H1 (cell line): ENCODE measurements at regions of chr7 and their contacts with region 1.

Region 1: DNA sequence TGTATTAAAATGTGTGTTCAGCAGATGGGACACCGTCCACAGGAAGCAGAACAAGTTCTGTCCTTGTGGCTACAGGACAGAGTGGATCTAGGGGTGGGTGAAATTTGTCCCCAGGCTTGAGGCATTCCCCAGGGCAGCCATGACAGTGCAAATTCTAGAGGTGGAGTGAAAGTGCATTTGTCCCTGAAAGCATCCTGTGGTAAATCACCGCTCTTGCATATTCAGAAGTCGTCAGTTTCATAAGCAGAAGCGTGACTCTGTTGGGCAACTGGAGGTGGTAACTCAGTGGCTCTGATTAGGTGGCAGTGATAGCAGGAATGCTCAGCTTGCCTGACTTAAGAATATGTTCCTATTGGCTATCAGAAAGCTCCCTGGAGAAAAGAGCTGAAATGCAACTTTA is 96.6 kb downstream of the SNX10 start:
- DNase-seq: no peak
- H3K4me3 ChIP-seq: no peak overlapping the region
- H3K27ac ChIP-seq: no peak overlapping the region
- H3K4me1 ChIP-seq: peaks cover 0 to 5% (median 1%) of the 10 kb centered on the region in 4 experiments; a peak in 1 of 7 replicates
- H3K27me3 ChIP-seq: no peaks in the 10 kb centered on the region
- CTCF ChIP-seq: no peak
- EP300 ChIP-seq: no peak
- POLR2A ChIP-seq: no peak
- RAD21 ChIP-seq: no peak

Region 2: GRCh38 chr7:26376175-26376917 is 11.9 kb before region 1 on chr7:
- CTCF ChIA-PET with region 1: interaction called, 17 read pairs
- POLR2A ChIA-PET with region 1: no interaction called
- DNase-seq: peak in 1 of 2 experiments; percentile 95
- H3K4me3 ChIP-seq: peak overlapping the region; percentile 44 to 89 (median 78)
- H3K27ac ChIP-seq: no peak overlapping the region
- H3K4me1 ChIP-seq: peaks cover 0 to 2% (median 0%) of the 10 kb centered on the region in 4 experiments; a peak in 2 of 7 replicates
- H3K27me3 ChIP-seq: no peaks in the 10 kb centered on the region
- CTCF ChIP-seq: no peak
- EP300 ChIP-seq: no peak
- POLR2A ChIP-seq: no peak
- RAD21 ChIP-seq: no peak; a peak in 1 of 4 replicates

Region 3: GRCh38 chr7:26398756-26399501 is 10.7 kb after region 1 on chr7:
- CTCF ChIA-PET with region 1: interaction called, 10 read pairs
- POLR2A ChIA-PET with region 1: interaction called, 8 read pairs
- DNase-seq: peak in 1 of 2 experiments; percentile 79
- H3K4me3 ChIP-seq: peak overlapping the region; percentile 78 to 87 (median 80)
- H3K27ac ChIP-seq: peak overlapping the region; percentile 84
- H3K4me1 ChIP-seq: peaks cover 0 to 13% (median 3%) of the 10 kb centered on the region in 4 experiments; a peak in 5 of 7 replicates
- H3K27me3 ChIP-seq: no peaks in the 10 kb centered on the region
- CTCF ChIP-seq: peak; percentile 34 to 46 (median 45)
- EP300 ChIP-seq: no peak
- POLR2A ChIP-seq: peak in 1 of 2 experiments; percentile 56; a peak in 1 of 3 replicates
- RAD21 ChIP-seq: peak; percentile 45 to 55

Region 4: DNA sequence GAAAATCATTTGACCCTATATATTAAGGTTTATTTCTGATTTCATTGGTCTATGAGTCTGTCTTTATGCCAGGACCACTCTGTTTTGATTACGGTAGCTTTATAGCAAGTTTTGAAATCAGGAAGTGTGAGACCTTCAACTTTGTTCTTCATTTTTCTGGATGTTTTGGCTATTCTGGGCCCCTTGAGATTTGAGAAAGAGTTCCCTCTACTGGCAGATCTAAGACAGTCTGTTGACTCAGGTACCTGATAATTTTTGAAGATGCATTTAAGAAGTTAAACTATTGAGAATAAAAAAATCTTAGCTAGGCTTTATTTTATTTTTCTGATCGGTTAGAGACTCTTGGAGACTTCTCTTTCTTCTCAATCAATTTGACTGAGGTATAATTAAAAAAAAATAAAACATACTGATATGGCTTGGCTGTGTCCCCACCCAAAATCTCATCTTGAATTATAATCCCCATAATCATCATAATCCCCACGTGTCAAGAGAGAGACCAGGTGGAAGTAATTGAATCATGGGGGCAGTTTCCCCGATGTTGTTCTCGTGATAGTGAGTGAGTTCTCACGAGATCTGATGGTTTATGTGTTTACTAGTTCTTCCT is 112.6 kb after region 1 on chr7:
- CTCF ChIA-PET with region 1: interaction called, 11 read pairs
- POLR2A ChIA-PET with region 1: no interaction called
- DNase-seq: no peak
- H3K4me3 ChIP-seq: no peak overlapping the region
- H3K27ac ChIP-seq: no peak overlapping the region
- H3K4me1 ChIP-seq: no peaks in the 10 kb centered on the region; a peak in 1 of 7 replicates
- H3K27me3 ChIP-seq: no peaks in the 10 kb centered on the region
- CTCF ChIP-seq: peak in 2 of 3 experiments; percentile 48 to 63; a peak in 3 of 4 replicates
- EP300 ChIP-seq: no peak
- POLR2A ChIP-seq: no peak
- RAD21 ChIP-seq: peak; percentile 67 to 77

Region 5: DNA sequence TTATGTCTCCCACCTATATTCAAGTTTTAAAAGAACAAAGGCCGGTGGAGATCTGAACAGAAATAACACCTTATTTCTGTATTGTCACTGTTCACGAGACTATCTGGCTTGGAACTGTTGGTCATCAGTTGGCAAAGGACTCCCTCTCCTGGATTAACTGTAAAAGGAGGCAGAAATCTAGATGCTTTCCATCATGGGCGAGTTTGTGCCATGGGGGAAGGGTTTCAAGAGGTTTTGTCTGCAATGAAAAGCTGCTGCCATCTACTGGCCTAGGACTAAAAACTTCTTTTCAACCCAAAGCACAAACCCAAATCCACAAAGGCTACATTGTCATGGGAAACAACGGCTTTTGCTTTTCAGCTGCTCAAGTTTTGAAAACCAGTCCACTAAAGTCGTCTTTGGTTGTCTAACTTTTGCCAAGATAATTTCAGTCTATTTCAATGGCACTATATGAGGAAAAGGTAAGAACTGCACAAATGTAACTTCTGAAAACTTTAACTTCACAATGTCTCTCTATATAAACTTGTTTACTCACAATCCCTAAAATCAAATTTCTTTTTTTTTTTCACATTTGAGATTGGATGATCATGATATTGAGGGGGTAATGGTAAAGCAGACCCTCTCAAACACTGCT is 279.4 kb after region 1 on chr7:
- CTCF ChIA-PET with region 1: interaction called, 13 read pairs
- POLR2A ChIA-PET with region 1: no interaction called
- DNase-seq: peak in 1 of 2 experiments; percentile 81
- H3K4me3 ChIP-seq: no peak overlapping the region
- H3K27ac ChIP-seq: no peak overlapping the region
- H3K4me1 ChIP-seq: no peaks in the 10 kb centered on the region
- H3K27me3 ChIP-seq: no peaks in the 10 kb centered on the region
- CTCF ChIP-seq: peak in 2 of 3 experiments; percentile 95 to 98; a peak in 3 of 4 replicates
- EP300 ChIP-seq: 0 out of 3 replicates have a peak, but pooled peaks of 1 of the 2 experiments have one; percentile 51
- POLR2A ChIP-seq: no peak
- RAD21 ChIP-seq: peak; percentile 100